ENCODE measurements at regions of chr22 and their contacts with region 1.

Region 1: GRCh38 chr22:19432133-19432851 is at the start of gene MRPL40:
- DNase-seq: peak; percentile 92
- H3K4me3 ChIP-seq: peak within 1 kb of the TSS; percentile 70 to 95 (median 93)
- H3K27ac ChIP-seq: peak within 1 kb of the TSS; percentile 63
- H3K4me1 ChIP-seq: peaks cover 17% of the 10 kb centered on the region
- H3K27me3 ChIP-seq: no peaks in the 10 kb centered on the region
- CTCF ChIP-seq: no peak
- total RNA-seq, gene MRPL40: 22.8 to 40.0 TPM

Region 2: DNA sequence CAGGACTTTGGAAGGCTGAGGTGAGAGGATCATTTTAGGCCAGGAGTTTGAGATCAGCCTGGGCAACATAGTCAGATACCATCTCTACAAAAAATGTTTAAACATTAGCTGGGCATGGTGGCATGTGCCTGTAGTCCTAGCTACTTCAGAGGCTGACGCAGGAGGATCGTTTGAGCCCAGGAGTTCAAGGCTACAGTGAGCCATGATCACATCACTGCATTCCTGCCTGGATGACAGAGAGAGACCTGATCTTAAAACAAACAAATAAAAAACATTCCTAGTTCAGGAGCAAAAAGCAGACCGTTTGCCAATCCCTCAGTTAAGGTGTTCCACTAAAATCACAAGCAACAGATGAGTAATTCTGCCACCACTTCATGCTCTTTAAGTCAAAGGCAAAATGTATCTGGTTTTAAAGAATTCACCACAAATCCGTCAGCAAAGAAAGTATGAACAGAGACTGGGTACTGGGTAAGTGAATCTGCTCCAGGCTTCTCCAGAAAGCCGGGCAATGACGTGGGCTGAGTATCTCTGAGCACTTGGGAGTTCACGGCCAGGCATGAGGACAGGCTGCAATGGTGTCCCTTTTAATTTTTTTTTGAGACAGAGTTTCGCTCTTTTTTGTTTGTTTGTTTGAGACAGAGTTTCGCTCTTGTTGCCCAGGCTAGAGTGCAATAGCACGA is 160.3 kb before region 1 on chr22:
- CTCF ChIA-PET with region 1: no interaction called
- dilution Hi-C with region 1: no loop called
- in situ Hi-C with region 1: no loop called
- intact Hi-C with region 1: no loop called
- DNase-seq: peak; percentile 20
- H3K4me3 ChIP-seq: no peak overlapping the region
- H3K27ac ChIP-seq: no peak overlapping the region
- H3K4me1 ChIP-seq: peaks cover 6% of the 10 kb centered on the region
- H3K27me3 ChIP-seq: no peaks in the 10 kb centered on the region
- CTCF ChIP-seq: no peak

Region 3: DNA sequence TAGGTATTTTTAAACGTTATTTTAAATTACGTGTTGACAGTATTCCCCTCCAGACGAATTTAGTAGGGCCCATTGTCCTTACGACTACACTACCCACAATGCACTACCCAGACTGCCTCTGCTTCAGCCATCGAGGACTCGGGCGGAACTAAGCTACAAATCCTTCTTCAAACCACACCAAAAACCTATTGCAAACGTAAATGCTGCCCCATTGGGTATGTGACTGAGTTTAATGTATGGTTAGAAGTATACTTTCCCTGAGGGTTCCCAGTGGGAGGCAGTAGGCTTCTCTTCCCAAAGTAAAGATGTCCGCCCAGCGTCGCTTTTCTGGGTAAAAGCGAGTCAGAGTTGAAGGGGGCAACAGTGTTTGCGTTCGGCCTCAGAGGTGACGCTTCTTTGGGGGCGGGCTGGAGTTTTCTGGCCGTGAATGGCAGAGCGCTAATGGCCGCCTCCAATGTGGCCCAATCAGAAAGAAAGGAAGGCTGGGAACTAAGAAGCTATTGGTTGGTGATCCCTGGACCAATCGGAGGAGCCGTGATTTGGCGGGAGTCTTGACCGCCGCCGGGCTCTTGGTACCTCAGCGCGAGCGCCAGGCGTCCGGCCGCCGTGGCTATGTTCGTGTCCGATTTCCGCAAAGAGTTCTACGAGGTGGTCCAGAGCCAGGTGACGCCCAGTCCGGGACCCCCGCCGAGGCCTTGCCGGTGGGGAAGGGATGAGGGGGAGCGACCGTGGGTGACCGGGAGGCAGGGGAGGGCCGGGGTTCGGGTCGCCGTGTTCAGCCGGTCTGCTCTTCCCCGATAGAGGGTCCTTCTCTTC is 47.3 kb after region 1 on chr22 and contains the start of gene CDC45:
- CTCF ChIA-PET with region 1: no interaction called
- dilution Hi-C with region 1: no loop called
- in situ Hi-C with region 1: no loop called
- intact Hi-C with region 1: loop called (anchors 1 kb)
- DNase-seq: peak; percentile 98
- H3K4me3 ChIP-seq: peak within 1 kb of the TSS; percentile 40 to 93 (median 91)
- H3K27ac ChIP-seq: peak within 1 kb of the TSS; percentile 100
- H3K4me1 ChIP-seq: peaks cover 30% of the 10 kb centered on the region
- H3K27me3 ChIP-seq: no peaks in the 10 kb centered on the region
- CTCF ChIP-seq: no peak
- total RNA-seq, gene CDC45: 2.2 to 31.1 TPM

Measured in mammary epithelial cell (primary cell).